Activated T-helper 2 cell treated with anti-CD3 and anti-CD28 coated beads, Interferon-gamma antibody, Interleukin-2, Interleukin-4, amounts not matched to agents 10 μg/mL and 5 μg/mL and 100 μg/mL, durations not matched to agents 14 hours and 24 hours and 36 hours (primary cell): ENCODE measurements at regions of chr7 and their contacts with region 1.

Region 1: GRCh38 chr7:150356265-150356897 is 12.2 kb upstream of the REPIN1 start:
- DNase-seq: no peak
- H3K4me3 Mint-ChIP-seq: no peak overlapping the region
- H3K27ac Mint-ChIP-seq: no peak overlapping the region
- H3K4me1 Mint-ChIP-seq: peaks cover 33% of the 10 kb centered on the region
- H3K27me3 Mint-ChIP-seq: peaks cover 11% of the 10 kb centered on the region

Region 2: GRCh38 chr7:150368096-150368883 is 11.9 kb after region 1 on chr7 and contains the start of gene REPIN1:
- intact Hi-C with region 1: loop called (anchors 1 kb)
- DNase-seq: peak; percentile 75
- H3K4me3 Mint-ChIP-seq: peak within 1 kb of the TSS; percentile 94
- H3K27ac Mint-ChIP-seq: peak within 1 kb of the TSS; percentile 94
- H3K4me1 Mint-ChIP-seq: peaks cover 36% of the 10 kb centered on the region
- H3K27me3 Mint-ChIP-seq: no peaks in the 10 kb centered on the region
- total RNA-seq, gene REPIN1: 81.5 and 82.2 TPM in 2 replicates

Region 3: GRCh38 chr7:150404805-150405583 is 48.6 kb after region 1 on chr7:
- intact Hi-C with region 1: loop called (anchors 2 kb)
- DNase-seq: peak; percentile 78
- H3K4me3 Mint-ChIP-seq: peak overlapping the region; percentile 88
- H3K27ac Mint-ChIP-seq: peak overlapping the region; percentile 95
- H3K4me1 Mint-ChIP-seq: peaks cover 58% of the 10 kb centered on the region
- H3K27me3 Mint-ChIP-seq: no peaks in the 10 kb centered on the region

Region 4: GRCh38 chr7:150420987-150421674 is 64.8 kb after region 1 on chr7:
- intact Hi-C with region 1: loop called (anchors 1 kb)
- DNase-seq: peak; percentile 79
- H3K4me3 Mint-ChIP-seq: no peak overlapping the region
- H3K27ac Mint-ChIP-seq: no peak overlapping the region
- H3K4me1 Mint-ChIP-seq: peaks cover 10% of the 10 kb centered on the region
- H3K27me3 Mint-ChIP-seq: peaks cover 2% of the 10 kb centered on the region